A549 (cell line): ENCODE measurements at regions of chrX and their contacts with region 1.

Region 1: DNA sequence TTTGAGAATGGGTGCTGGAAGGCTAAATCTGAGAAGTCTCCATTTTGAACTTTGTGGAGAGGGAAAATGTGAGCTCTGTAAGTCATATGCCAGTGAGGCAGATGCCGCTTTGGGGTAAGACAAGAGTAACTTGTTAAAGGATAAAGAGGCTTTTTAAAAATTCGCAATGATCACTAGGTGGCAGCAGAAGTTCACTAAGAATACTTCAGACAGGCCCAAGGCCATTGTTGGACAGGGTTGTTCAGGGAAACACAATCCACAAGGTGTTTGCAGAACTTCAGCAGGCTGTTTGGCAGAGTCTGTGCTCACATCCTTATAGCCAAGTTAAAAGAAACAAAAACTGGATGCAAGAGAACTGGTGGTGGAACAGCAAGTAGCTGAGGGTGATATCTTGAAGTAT is 13.7 kb upstream of the PIGA start:
- DNase-seq: peak; percentile 31 to 72
- ATAC-seq: peak; percentile 91 to 93
- H3K4me3 ChIP-seq: no peak overlapping the region
- H3K27ac ChIP-seq: no peak overlapping the region
- H3K4me1 ChIP-seq: peaks cover 4% of the 10 kb centered on the region
- CTCF ChIP-seq: peak; percentile 57
- EP300 ChIP-seq: no peak
- POLR2A ChIP-seq: no peak
- RAD21 ChIP-seq: peak; percentile 67 to 69

Region 2: DNA sequence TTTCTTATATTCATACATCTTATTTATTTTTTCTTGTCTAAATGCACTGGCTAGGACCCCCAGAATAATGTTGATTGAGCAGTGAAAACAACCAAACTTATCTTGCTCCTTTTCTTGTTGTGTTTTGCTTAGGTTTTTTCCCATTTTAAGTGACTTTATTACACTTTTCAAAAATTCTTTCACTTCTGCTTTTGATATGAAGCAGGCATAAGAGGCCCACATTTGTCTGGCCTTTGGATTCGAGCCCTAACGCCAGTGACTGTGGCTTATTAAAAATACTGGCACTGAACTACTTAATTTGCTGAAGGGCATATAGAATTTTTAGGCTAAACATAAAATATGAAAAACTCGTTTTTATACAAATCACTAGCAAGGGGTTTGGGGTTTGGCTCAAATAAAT is 276.2 kb before region 1 on chrX:
- CTCF ChIA-PET with region 1: no interaction called
- POLR2A ChIA-PET with region 1: no interaction called
- DNase-seq: no peak
- ATAC-seq: no peak
- H3K4me3 ChIP-seq: no peak overlapping the region
- H3K27ac ChIP-seq: no peak overlapping the region
- H3K4me1 ChIP-seq: no peaks in the 10 kb centered on the region
- CTCF ChIP-seq: no peak
- EP300 ChIP-seq: no peak
- POLR2A ChIP-seq: no peak
- RAD21 ChIP-seq: no peak

Region 3: DNA sequence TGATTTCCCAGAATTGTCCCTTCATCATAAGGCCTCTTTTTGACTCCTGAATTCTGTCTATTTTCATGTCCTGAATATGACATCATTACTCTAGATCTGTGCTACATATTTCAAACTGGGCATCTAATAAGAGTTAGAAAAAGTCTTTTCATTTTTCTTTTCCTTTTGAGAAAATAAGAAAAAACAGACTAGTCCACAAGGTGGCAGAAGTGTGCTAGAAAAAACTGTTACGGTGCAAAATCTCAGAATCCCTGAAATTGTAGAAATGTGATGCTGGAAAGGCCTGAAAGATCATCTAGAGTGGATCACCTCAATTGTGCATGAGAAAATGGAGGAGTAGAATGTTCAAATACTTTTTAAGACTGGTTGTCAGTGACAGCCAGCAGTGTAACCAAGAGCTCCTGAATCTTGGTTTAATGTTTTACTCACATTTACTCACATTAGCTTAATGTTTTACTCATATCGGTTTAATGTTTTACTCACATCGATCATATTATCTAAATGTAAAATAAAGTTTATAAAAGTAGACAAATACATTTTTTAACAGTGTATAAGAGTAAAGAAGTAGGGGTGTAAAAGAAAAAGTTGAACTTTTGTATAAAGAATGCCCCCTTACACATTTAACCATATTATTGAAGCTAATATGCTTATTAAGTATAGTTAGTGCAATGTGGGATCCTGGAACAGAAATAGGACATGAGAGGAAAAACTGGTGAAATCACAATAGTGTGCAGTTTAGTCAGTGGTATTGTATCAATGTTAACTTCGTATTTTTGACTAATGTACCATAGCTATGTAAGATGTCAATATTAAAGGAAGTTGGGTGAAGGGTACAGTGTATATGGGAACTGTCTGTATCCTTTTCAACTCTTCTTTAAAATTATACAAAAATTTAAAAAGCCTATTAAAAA is 48.9 kb before region 1 on chrX:
- CTCF ChIA-PET with region 1: interaction called, 11 read pairs
- POLR2A ChIA-PET with region 1: no interaction called
- DNase-seq: peak; percentile 25 to 33
- ATAC-seq: peak; percentile 19 to 63; a peak in 3 of 6 replicates
- H3K4me3 ChIP-seq: no peak overlapping the region
- H3K27ac ChIP-seq: peak overlapping the region; percentile 58 to 77
- H3K4me1 ChIP-seq: peaks cover 14% of the 10 kb centered on the region
- CTCF ChIP-seq: peak; percentile 64
- EP300 ChIP-seq: no peak
- POLR2A ChIP-seq: no peak
- RAD21 ChIP-seq: peak; percentile 59 to 70

Region 4: DNA sequence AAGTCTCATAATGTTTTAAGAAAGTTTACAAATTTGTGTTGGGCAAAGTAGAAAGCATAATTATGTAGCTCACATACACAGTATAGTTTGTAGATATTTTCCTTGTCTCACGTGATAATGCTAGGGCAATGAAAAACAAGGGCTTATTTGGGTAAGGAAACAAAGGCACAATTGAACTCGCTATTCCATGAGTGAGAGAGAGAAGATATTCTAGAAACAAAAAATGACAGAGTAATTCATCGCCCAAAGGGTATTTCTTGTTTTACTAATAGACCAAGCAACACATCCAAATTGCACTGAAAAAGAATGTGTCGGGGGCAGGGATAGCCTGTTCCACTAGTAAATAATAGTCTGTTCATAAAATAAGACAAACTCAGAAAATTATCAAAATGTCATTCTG is 30.0 kb before region 1 on chrX:
- CTCF ChIA-PET with region 1: no interaction called
- POLR2A ChIA-PET with region 1: no interaction called
- DNase-seq: no peak
- ATAC-seq: no peak
- H3K4me3 ChIP-seq: no peak overlapping the region
- H3K27ac ChIP-seq: no peak overlapping the region
- H3K4me1 ChIP-seq: no peaks in the 10 kb centered on the region
- CTCF ChIP-seq: no peak
- EP300 ChIP-seq: no peak
- POLR2A ChIP-seq: no peak
- RAD21 ChIP-seq: no peak

Region 5: DNA sequence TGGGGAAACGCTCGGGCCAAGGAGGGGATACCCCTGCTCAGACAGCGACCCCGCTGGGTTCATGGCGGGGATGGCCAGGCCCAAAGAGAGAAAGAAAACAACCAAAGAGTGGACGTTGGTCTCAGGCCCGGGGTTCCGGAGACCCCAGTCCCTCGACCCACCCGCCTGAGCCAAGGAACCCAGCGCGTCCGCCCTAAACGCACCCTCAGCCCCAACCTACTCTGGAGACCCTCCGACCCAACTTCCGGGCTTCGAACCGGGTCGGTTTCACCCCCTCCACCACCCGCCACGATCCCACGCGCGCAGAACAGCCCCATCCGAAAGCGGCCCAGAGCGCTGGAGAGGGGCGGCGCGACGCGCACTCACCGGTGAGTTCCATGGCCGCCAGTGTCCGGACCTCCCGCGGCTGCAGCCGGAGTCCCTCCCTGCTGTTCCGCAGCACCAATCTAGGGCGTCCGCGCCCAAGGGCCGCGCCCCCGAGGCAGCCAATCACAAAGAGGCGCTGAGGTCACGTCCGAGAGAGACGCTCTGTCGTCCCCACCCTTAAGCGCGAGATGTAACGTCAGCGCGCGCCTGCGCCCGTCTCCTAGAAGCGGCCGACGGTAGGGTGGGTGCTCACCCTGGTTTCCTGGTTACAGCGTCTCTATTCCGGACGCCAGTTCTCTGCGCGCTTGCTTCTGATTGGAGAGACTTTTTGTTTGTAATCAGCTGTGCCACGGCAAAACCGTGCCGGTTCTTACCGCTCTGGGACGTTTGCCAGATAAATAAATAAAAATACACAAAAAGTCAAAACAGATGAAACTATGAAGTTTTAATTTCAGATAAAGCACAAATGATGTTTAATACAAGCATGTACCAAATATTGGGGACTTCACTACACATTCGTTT is 13.7 kb before region 1 on chrX and contains the start of gene PIGA:
- CTCF ChIA-PET with region 1: interaction called, 16 read pairs
- POLR2A ChIA-PET with region 1: no interaction called
- DNase-seq: peak; percentile 92 to 97
- ATAC-seq: peak; percentile 98 to 99
- H3K4me3 ChIP-seq: peak within 1 kb of the TSS; percentile 67
- H3K27ac ChIP-seq: peak within 1 kb of the TSS; percentile 73 to 92
- H3K4me1 ChIP-seq: no peaks in the 10 kb centered on the region; the same call in 2 of the 3 replicates
- CTCF ChIP-seq: no peak
- EP300 ChIP-seq: no peak
- POLR2A ChIP-seq: peak; percentile 54
- RAD21 ChIP-seq: no peak
- polyA plus RNA-seq, gene PIGA: 19.7 and 21.2 TPM in 2 replicates

Region 6: DNA sequence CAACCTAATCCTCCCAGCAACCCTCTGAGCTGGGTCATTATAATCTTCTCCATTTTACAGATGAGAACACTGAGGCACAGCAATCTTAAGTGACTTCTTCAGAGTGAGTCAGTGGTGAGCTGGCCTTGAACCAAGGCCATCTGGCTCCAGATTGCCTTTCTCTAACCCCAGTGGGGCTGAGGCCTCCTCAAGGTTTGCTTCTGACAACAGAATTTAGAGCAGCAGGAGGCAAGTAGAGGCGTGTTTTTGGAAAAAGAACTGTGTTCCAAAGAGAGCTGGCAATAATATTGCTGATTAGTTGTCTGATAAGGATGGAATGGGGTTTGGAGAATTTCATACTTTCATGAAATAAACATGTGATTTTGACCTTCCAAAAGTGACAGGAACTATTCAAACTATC is 102.9 kb after region 1 on chrX:
- CTCF ChIA-PET with region 1: interaction called, 11 read pairs
- POLR2A ChIA-PET with region 1: no interaction called
- DNase-seq: no peak
- ATAC-seq: no peak
- H3K4me3 ChIP-seq: no peak overlapping the region
- H3K27ac ChIP-seq: no peak overlapping the region
- H3K4me1 ChIP-seq: no peaks in the 10 kb centered on the region
- CTCF ChIP-seq: no peak
- EP300 ChIP-seq: no peak
- POLR2A ChIP-seq: no peak
- RAD21 ChIP-seq: no peak

Region 7: GRCh38 chrX:15471016-15471415 is 122.0 kb after region 1 on chrX:
- CTCF ChIA-PET with region 1: interaction called, 34 read pairs
- POLR2A ChIA-PET with region 1: no interaction called
- DNase-seq: peak; percentile 19 to 70
- ATAC-seq: peak; percentile 86 to 97
- H3K4me3 ChIP-seq: no peak overlapping the region
- H3K27ac ChIP-seq: no peak overlapping the region
- H3K4me1 ChIP-seq: peaks cover 12% of the 10 kb centered on the region
- CTCF ChIP-seq: peak; percentile 71
- EP300 ChIP-seq: no peak
- POLR2A ChIP-seq: no peak
- RAD21 ChIP-seq: peak; percentile 55 to 63

Region 8: DNA sequence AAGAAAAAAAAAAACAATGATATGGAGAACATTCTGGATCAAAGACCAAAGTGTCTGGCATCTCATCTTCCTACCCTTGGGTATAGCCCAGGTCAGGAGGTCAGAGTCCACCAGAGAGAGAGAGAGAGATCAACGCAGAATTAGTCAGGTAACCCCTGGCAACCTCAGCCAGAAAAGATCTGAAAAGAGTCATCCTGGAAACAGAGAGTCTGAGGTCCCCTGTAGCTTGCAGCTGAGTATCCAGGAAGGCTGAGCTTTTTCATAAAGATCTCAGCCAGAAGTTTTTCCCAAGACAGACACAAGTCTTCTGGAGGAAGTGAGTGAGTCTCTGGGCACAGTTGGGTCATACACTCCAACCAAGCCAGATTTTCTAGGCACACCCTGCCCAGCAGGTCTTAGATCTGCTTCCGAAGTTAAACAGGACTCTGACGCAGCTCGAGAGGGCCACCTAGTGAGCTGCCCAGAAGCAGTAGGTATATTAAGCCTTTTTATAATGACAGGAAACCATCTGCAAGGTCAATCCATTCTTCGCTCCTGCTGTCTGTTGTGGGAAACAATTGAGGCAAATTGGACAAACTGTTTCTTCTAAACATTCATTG is 216.0 kb after region 1 on chrX:
- CTCF ChIA-PET with region 1: interaction called, 10 read pairs
- POLR2A ChIA-PET with region 1: no interaction called
- DNase-seq: peak; percentile 13 to 72
- ATAC-seq: peak; percentile 94 to 98
- H3K4me3 ChIP-seq: no peak overlapping the region
- H3K27ac ChIP-seq: no peak overlapping the region
- H3K4me1 ChIP-seq: no peaks in the 10 kb centered on the region
- CTCF ChIP-seq: peak; percentile 67
- EP300 ChIP-seq: no peak
- POLR2A ChIP-seq: no peak
- RAD21 ChIP-seq: peak; percentile 77 to 81